Activated T-helper 1 cell treated with anti-CD3 and anti-CD28 coated beads, Interleukin-12 subunit alpha, Interleukin-12 subunit beta, Interleukin-2, Interleukin-4 antibody, amounts not matched to agents 30 ng/mL and 10 ng/mL and 1 ng/mL, durations not matched to agents 14 hours and 24 hours and 36 hours (primary cell): ENCODE measurements at regions of chr3 and their contacts with region 1.

Region 1: DNA sequence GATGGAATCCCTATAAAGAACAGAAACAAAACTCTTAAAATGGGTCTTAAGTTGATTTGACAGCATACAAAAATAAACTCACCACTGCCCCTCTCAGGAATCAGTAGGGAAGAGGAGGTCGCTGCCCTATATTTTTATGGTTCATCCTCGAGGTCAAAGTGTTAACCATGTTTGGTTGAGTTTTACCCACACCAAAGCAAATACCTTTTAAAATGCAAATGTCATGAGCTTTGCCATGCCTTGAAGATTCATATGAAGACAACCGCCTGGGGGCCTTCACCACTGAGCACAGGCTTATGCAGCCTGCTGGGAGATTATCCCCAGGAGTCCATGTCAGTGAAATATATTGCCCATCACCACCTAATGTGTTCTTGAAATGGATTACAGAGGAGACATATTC is 66.1 kb downstream of the GLB1 start:
- DNase-seq: peak; percentile 50
- H3K4me3 Mint-ChIP-seq: peak overlapping the region; percentile 12
- H3K27ac Mint-ChIP-seq: peak overlapping the region; percentile 49
- H3K4me1 Mint-ChIP-seq: peaks cover 32% of the 10 kb centered on the region
- H3K27me3 Mint-ChIP-seq: no peaks in the 10 kb centered on the region

Region 2: GRCh38 chr3:32901432-32902409 is 129.1 kb before region 1 on chr3:
- intact Hi-C with region 1: no loop called
- DNase-seq: peak; percentile 8
- H3K4me3 Mint-ChIP-seq: peak overlapping the region; percentile 10
- H3K27ac Mint-ChIP-seq: no peak overlapping the region
- H3K4me1 Mint-ChIP-seq: no peaks in the 10 kb centered on the region
- H3K27me3 Mint-ChIP-seq: peaks cover 22% of the 10 kb centered on the region

Region 3: DNA sequence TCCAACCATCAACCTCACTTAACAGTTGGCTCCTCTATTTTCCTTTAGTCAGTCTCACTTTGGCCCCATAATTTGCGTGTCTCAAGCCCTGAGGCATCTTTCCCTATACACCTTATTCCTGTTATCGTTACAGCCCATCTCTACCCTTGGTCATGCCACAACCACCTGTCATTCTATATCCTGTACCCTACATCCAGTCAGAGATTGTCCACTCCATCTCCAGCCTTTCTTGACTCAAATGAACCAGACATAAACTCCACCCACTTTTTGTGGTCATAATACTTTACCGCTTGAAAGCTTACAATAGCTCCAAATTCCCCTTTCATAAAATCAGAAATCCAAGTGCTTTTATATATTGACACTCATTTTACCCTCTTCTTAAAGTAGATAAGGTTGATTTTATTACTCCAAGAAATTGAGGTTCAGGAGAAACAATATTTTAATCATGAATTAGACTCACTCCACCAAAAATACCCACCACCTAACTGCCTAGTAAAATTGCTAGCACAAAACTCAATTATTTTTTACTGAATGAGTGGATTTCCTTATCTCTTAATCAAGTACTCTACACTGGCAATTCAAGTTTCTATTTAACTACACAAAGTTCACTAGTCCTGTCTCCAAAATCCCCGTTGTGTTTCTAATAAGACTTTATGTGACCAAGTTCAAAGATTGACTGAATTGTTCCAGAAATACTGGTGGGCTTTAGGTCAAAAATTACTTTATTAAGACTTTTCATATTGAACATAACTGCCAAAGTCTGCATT is 70.2 kb before region 1 on chr3:
- intact Hi-C with region 1: loop called (anchors 2 kb)
- DNase-seq: no peak
- H3K4me3 Mint-ChIP-seq: peak overlapping the region; percentile 34
- H3K27ac Mint-ChIP-seq: peak overlapping the region; percentile 97
- H3K4me1 Mint-ChIP-seq: peaks cover 56% of the 10 kb centered on the region
- H3K27me3 Mint-ChIP-seq: no peaks in the 10 kb centered on the region

Region 4: DNA sequence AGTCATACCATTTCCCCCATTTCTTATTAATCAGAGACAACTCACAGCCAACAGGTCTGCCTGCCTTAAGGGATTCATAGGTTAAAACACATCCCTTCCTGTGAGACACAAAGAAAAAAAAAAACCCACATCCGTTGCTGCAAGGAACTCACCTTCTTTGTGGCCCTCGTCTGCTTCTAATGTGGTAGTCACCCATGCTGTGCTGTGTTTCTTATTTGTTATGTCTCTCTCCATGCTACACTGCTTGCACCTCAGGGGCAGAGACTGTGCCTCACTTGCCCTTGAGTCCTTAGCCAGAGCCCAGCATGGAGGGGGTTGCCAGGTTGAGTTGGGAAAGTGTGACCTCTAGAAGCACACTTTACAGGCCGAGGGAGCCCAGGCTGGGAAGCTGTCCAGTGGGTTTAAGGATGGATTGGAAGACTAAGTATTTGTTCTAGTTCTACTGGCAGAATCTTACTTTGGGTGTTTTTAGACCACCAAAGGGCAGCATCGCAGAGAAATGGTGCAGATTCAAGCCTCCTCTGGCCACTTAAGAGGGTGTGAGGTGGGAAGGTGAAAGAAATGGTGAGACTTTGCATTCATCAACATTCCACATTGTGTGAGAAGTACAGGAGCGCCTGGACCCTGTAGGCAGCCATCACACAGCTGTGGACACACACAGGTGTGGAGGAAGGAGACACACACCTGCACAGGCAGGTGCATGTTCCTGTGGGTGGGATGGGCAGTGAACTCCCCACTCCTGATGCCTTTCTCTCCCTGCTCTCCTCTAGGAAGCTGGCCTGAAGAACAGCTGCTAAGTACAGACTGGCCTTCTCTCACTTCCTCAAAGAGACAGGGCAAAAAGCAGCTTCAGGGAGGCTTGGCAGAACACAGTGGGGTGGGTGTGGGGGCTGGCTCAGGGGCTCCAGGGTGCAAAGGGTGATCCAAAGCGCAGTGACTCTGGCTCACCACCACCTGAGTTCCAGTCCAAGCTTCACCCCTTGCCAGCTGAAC is 17.3 kb after region 1 on chr3:
- intact Hi-C with region 1: loop called (anchors 1 kb)
- DNase-seq: peak; percentile 70
- H3K4me3 Mint-ChIP-seq: peak overlapping the region; percentile 80
- H3K27ac Mint-ChIP-seq: peak overlapping the region; percentile 99
- H3K4me1 Mint-ChIP-seq: peaks cover 81% of the 10 kb centered on the region
- H3K27me3 Mint-ChIP-seq: peaks cover 1% of the 10 kb centered on the region

Region 5: DNA sequence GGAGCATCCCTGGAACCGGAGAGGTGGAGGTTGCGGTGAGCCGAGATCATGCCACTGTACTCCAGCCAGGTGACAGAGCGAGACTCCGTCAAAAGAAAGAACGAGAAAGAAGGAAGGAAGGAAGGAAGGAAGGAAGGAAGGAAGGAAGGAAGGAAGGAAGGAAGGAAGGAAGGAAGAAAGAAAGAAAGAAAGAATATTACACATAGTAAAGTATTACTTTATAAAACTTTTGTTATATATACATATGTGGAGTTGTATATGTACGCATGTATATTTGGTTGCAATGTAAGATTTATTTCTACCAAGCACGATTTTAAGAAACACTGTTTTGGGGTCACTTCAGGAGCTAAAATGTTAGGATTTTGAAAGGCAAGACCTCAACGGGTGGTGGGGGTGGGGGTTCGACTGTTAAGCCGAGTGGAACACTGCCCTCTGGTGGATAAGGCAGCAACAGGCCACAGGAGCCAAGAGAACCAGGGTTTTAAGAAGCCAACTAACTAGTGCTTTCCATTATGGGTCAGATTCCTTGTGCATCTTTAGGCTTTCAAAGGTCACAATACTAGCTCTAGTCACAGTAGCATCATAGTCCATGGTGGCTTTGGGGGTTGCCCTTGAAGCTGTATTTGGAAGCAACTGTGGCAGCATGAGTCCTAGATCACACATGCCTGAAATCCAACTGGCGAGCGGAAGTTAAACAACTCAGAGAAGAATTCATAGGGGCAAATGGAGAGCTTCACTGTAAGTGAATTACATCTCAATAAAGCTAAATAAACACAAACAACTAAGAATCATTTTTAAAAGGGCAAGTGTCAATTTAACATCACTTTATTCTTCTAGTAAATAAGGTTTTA is 43.6 kb after region 1 on chr3:
- intact Hi-C with region 1: loop called (anchors 1 kb)
- DNase-seq: peak; percentile 43
- H3K4me3 Mint-ChIP-seq: no peak overlapping the region
- H3K27ac Mint-ChIP-seq: no peak overlapping the region
- H3K4me1 Mint-ChIP-seq: peaks cover 42% of the 10 kb centered on the region
- H3K27me3 Mint-ChIP-seq: no peaks in the 10 kb centered on the region